Motor neuron (in vitro differentiated cells): ENCODE measurements at regions of chr7 and their contacts with region 1.

Region 1: DNA sequence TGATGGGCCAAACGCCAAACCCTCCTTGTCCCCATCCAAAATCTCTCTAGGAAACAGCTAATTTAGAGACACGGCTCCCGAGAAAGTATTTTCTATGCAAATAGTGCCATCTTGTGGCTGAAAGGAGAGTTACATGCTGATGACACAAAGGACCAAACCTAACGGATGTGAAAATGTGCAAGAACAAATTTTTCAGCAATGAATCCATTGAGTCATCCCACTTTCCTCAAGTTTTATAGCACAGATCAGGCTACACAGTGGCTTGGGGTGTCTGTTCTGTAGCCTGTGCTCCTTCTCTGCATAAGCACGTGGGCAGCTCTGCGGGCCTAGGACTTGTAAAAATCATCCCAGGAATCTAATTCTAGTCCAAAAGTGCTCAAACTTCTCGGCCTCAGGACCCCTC is 154.8 kb upstream of the PRR15 start:
- ATAC-seq: peak; percentile 59 to 97 (median 69)
- H3K4me3 ChIP-seq: no peak overlapping the region
- H3K27ac ChIP-seq: no peak overlapping the region
- H3K4me1 ChIP-seq: no peaks in the 10 kb centered on the region

Region 2: DNA sequence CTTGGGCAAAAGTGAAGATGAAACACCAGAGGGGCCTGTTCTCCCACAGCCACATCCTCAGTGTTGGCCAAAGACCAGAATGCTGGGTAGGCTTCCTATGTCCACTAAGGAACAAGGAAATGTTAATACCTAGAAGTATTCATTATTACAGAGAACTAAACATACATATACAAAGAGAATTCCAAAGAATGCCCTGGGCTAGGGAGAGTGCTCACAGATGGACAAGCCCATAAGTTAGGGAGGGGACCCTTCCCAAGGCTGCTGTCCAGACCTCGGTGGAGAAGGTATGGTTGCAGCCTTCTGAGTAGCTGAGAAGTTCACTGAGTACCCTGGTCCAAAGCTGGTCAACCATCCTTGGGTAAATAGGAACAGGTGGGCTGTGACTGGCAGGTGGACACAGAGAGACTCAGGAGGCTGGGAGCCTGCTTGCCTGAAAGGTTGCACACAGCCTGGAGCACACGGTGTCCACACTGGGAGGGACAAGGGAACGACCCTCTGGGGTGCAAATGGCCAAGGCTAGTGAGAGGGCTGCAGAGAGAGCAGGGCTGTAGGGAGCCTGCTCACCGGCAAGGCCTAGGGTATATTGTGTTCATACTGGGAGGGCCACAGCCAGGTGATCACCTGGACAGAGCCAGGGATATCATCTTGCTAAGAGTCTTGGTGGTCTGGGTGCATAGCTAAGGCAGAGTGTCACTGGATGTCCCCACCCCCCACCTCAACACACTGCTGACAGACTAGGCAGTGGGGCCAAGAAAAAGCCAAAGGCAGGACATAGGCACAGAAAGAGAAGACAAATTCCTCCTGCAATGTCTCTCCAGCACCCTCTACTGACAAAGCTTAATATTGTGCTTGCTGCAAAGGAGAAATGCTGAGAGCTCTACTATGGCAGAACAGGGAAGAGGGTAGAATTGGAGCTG is 302.8 kb before region 1 on chr7:
- in situ Hi-C with region 1: loop called in 1 of 9 experiments (anchors 25 kb)
- ATAC-seq: peak; percentile 74 to 87 (median 82)
- H3K4me3 ChIP-seq: no peak overlapping the region
- H3K27ac ChIP-seq: no peak overlapping the region
- H3K4me1 ChIP-seq: no peaks in the 10 kb centered on the region

Region 3: DNA sequence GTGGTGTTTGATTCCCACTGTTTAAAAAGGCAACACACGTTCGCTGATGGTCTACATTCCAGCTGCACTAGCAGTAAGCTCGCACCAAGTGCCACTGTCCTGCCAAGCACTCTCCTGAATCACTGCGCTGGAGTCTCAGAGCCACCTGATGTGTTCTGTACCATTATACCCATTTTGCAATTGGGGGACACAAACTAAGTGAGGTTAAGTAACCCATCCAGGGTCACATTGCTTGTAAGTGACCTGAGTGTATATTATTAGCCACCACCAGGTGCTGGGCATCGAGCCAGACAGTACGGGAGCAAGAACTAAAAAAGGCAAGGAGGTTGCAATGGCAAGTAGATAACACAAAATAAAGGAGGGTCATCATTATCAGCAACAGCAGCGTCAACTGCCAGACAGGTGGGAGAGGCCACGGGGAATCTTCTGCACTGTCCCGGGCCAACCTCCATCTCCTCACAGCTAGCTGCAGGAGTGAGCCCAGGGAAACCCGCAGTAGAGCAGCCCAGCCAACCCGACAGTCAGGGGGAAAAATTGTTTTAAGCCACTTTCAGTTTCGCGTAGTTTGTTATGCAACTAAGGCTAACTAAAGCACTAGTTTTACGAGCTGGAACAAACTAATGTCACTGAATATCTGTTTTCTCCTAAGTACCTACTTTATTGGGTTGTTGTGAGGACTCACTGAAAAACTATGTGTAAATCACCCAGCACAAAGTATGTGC is 261.8 kb before region 1 on chr7:
- in situ Hi-C with region 1: no loop called
- ATAC-seq: peak in 7 of 8 experiments; percentile 40 to 63 (median 42)
- H3K4me3 ChIP-seq: peak overlapping the region in 3 of 5 donors; percentile 40 to 49 (median 40)
- H3K27ac ChIP-seq: no peak overlapping the region
- H3K4me1 ChIP-seq: peaks cover 13 to 24% of the 10 kb centered on the region in 2 donors

Region 4: DNA sequence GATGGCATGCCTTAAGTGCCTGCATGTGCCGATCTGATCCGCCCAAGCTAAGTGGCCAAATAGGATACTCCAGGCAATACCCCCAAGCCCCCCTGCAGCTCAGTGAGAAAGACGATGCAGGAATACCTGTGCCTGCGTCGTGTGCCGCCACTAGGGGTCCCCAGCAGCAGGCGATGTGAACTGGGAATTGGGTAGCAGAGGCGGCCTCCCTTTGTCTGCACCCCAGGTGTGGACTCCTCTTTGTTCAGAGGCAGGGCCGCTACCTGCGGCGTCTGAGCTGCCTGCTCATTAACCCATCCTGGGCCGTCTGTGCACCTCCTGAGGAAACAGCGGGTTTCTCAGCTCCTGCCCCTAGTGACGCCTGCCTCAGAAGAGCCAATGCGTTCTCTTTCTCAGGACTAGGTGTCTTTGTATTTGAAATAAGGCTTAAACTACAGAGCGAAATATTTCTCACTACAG is 219.1 kb before region 1 on chr7:
- in situ Hi-C with region 1: loop called in 5 of 9 experiments (anchors 10 to 25 kb)
- ATAC-seq: peak; percentile 22 to 65 (median 51)
- H3K4me3 ChIP-seq: no peak overlapping the region
- H3K27ac ChIP-seq: peak overlapping the region in 1 of 2 donors; percentile 27
- H3K4me1 ChIP-seq: peaks cover 13 to 19% of the 10 kb centered on the region in 2 donors